ENCODE measurements at regions of chr17 and their contacts with region 1.

Region 1: DNA sequence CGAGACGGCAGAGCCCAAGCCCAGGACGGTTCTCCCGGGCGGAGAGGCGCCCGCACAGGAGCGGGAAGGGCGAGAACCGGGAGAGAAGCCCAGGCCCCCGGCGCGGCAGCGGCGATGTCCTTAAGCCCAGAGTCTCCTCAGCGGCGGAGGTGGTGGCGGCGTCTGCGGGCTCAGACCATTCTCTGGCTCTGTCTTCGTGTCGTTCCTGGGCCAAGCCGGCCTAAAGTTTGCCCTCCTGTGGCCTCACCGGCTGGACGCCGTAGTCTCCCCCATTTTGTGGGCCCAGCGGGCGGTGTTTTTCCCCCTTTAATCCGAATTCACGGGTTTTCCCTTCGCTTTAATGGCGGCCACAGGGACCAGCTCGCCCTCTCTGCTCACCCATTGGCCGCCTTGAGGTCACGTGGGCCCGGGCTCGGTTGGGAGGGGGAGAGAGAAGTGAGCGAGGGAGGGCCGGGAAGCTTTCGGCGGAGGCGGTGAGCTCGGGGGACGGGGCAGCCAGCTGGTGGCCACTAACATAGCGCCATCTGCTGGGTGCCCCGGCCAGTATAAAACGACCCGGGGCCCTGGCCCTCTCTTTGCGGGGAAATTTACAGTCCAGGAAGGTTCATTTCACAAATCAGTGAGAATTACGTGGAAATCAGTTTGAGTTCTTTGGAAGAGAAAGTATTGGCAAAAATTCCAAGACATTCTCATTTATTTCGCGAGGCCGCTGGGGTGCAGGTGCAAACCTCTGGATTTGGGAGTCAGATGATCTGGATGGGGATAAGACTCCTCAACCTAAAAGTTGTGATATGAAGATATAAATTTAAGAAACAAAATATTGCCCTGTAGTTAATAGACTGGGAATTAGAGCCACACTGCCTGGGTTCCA is 755 bp upstream of the MED13 start:
- DNase-seq: peak; percentile 99
- ATAC-seq: peak; percentile 94
- H3K4me3 ChIP-seq: peak overlapping the region; percentile 96
- H3K27ac ChIP-seq: peak overlapping the region; percentile 82
- H3K4me1 ChIP-seq: peaks cover 24% of the 10 kb centered on the region
- H3K27me3 ChIP-seq: no peaks in the 10 kb centered on the region
- CTCF ChIP-seq: peak; percentile 98

Region 2: DNA sequence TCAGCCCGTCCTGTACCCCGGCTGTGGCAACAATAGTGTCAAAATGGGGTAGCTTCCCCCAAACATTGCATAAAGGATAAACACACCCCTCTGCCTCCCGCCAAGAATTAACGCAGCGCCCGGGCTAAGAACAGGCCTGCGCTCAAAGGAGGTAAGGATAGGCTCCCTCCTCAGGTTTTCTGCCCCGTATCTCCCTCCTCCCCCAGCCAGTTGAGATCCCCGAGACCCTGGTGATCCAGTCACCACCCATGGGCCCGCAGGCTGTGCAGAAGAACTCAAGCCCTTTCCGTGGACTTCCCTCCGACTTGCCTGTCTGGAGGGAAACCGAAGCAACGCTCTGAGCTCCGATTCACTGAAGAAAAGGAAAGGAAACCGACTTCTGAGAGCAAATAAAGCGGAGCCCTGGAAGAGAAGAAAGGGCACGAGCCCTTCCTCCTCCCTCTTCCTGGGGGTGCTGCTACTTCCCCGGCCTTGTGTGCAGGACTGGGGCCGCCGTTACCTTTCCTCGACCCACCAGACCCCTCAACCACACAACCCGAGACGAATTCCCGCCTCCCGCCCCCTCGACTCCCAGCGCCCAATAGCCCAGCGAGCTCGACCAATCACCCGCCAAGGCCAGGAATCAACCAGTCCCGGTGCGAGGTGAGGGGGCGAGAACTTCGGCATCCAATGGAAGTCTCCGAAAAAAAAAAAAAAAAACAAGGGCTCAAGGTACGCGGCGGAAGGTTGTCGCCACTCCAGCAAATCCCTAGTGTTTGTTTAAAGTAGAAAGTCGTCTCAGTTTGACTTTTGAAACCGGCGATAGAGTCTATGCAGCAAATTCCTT is 202.6 kb before region 1 on chr17 and contains the start of gene BRIP1:
- CTCF ChIA-PET with region 1: no interaction called
- POLR2A ChIA-PET with region 1: interaction called, 33 read pairs
- intact Hi-C with region 1: loop called (anchors 2 kb)
- DNase-seq: peak; percentile 98
- ATAC-seq: peak; percentile 91
- H3K4me3 ChIP-seq: peak within 1 kb of the TSS; percentile 79
- H3K27ac ChIP-seq: peak within 1 kb of the TSS; percentile 51
- H3K4me1 ChIP-seq: peaks cover 34% of the 10 kb centered on the region
- H3K27me3 ChIP-seq: no peaks in the 10 kb centered on the region
- CTCF ChIP-seq: no peak
- total RNA-seq, gene BRIP1: 13.8 and 21.1 TPM in 2 replicates

Region 3: GRCh38 chr17:61927200-61928165 is 138.3 kb before region 1 on chr17 and contains the start of gene INTS2:
- CTCF ChIA-PET with region 1: no interaction called
- POLR2A ChIA-PET with region 1: no interaction called
- intact Hi-C with region 1: loop called (anchors 5 kb)
- DNase-seq: peak; percentile 97
- ATAC-seq: peak; percentile 86
- H3K4me3 ChIP-seq: peak within 1 kb of the TSS; percentile 88
- H3K27ac ChIP-seq: peak within 1 kb of the TSS; percentile 68
- H3K4me1 ChIP-seq: peaks cover 16% of the 10 kb centered on the region
- H3K27me3 ChIP-seq: no peaks in the 10 kb centered on the region
- CTCF ChIP-seq: no peak
- total RNA-seq, gene INTS2: 16.3 and 18.1 TPM in 2 replicates

Region 4: DNA sequence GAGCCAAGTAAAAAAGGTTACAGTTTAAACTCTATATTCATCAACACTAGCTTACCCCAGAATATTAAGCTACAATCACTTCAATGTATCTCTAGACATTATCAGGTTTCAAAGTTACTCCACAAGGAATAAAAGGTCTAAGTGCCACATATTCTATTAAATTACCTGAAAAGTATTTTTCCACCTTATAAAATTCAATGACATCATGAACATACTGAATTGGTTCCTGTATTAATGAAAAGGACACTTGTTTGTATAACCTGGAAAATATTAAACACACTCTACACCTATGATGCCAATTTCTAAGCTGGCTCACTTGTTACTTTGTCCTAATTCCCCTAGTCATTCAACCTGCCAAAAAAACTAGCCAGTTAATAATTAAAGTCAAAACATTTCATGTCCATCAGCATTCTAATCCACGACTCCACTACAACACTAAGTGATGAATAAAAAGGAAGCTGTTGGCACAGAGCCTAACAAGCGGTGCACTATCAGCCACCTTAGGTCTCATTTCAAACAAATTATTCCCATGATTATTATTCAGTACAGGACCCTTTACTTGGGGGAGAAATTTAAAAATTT is 13.0 kb before region 1 on chr17:
- CTCF ChIA-PET with region 1: no interaction called
- POLR2A ChIA-PET with region 1: interaction called, 7 read pairs
- intact Hi-C with region 1: loop called (anchors 1 kb)
- DNase-seq: no peak
- ATAC-seq: no peak
- H3K4me3 ChIP-seq: no peak overlapping the region
- H3K27ac ChIP-seq: no peak overlapping the region
- H3K4me1 ChIP-seq: peaks cover 24% of the 10 kb centered on the region
- H3K27me3 ChIP-seq: no peaks in the 10 kb centered on the region
- CTCF ChIP-seq: no peak

Region 5: DNA sequence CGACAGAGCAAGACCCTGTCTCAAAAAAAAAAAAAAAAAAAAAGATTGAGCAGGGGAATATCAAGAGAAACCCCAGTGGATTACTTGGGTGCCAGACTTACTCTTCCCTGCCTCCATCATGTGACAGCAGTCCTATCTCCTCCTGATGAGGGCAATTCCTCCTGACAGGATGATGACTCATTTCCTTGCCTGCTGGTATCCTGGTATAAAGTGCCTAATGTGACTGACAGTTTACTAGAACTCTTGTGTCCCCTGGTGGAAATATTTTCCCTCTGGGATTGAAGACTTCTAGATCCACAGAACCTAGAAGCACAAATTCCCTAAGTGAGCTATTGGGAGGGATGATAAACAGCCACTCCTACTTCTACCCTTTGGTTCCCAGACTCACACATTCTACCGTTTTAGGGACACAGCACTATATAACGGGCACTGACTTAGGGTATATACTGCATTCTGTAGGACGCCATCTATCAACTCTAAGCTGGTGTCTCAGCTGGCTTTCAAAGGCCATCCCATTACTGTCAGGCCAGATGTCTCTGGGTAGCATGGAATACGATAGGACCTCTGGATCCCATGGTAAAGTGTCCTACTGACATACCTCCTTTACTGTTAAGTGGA is 113.8 kb after region 1 on chr17:
- CTCF ChIA-PET with region 1: interaction called, 4 read pairs
- POLR2A ChIA-PET with region 1: interaction called, 3 read pairs
- intact Hi-C with region 1: loop called (anchors 10 kb)
- DNase-seq: peak; percentile 95
- ATAC-seq: peak; percentile 99
- H3K4me3 ChIP-seq: no peak overlapping the region
- H3K27ac ChIP-seq: peak overlapping the region; percentile 31
- H3K4me1 ChIP-seq: peaks cover 19% of the 10 kb centered on the region
- H3K27me3 ChIP-seq: no peaks in the 10 kb centered on the region
- CTCF ChIP-seq: peak; percentile 86

Measured in PC-3 (cell line).